HCT116 (cell line): ENCODE measurements at regions of chr1 and their contacts with region 1.

Region 1: DNA sequence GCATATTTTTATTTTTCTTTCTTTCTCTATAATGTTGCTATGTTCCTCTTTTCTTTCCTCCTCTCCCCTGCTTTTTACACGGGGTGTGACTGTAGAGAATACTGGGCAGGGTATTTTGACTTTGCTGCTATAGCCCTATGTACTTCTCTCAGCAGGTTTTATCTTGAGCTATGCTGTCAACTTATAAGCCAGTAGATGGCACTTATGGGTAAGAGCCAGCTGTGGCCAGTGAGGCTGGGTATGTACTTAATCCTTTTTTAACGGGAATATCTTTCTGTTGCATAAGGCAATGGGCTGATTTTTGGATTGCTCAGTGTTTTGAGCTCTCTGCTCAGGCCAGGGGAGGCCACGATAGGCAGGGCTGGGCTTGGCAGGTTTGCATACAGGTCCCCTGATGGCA is 99.0 kb downstream of the KCNK2 start:
- DNase-seq: no peak
- ATAC-seq: peak; percentile 70
- H3K4me3 ChIP-seq: no peak overlapping the region
- H3K27ac ChIP-seq: no peak overlapping the region
- H3K4me1 ChIP-seq: no peaks in the 10 kb centered on the region
- H3K27me3 ChIP-seq: no peaks in the 10 kb centered on the region
- CTCF ChIP-seq: peak; percentile 9 to 29 (median 23); a peak in 3 of 6 replicates
- POLR2A ChIP-seq: no peak
- RAD21 ChIP-seq: peak; percentile 47; the same call in 1 of the 2 replicates

Region 2: GRCh38 chr1:215166886-215167285 is 14.6 kb before region 1 on chr1:
- CTCF ChIA-PET with region 1: no interaction called
- POLR2A ChIA-PET with region 1: no interaction called
- RAD21 ChIA-PET with region 1: no interaction called
- intact Hi-C with region 1: no loop called
- DNase-seq: no peak
- ATAC-seq: no peak
- H3K4me3 ChIP-seq: no peak overlapping the region
- H3K27ac ChIP-seq: no peak overlapping the region
- H3K4me1 ChIP-seq: no peaks in the 10 kb centered on the region
- H3K27me3 ChIP-seq: no peaks in the 10 kb centered on the region
- CTCF ChIP-seq: no peak
- POLR2A ChIP-seq: no peak
- RAD21 ChIP-seq: no peak

Region 3: GRCh38 chr1:215497528-215497927 is 316.0 kb after region 1 on chr1:
- CTCF ChIA-PET with region 1: no interaction called
- POLR2A ChIA-PET with region 1: no interaction called
- RAD21 ChIA-PET with region 1: no interaction called
- intact Hi-C with region 1: loop called (anchors 5 kb)
- DNase-seq: no peak
- ATAC-seq: no peak
- H3K4me3 ChIP-seq: no peak overlapping the region
- H3K27ac ChIP-seq: no peak overlapping the region
- H3K4me1 ChIP-seq: no peaks in the 10 kb centered on the region
- H3K27me3 ChIP-seq: no peaks in the 10 kb centered on the region
- CTCF ChIP-seq: no peak
- POLR2A ChIP-seq: no peak
- RAD21 ChIP-seq: no peak